T-cell (primary cell): ENCODE measurements at regions of chr7 and their contacts with region 1.

Region 1: GRCh38 chr7:25951031-25951948 is 200.7 kb upstream of the NFE2L3 start:
- DNase-seq: peak; percentile 70 to 93 (median 87)
- ATAC-seq: peak; percentile 98 to 99 (median 99)
- H3K4me3 ChIP-seq: peak overlapping the region; percentile 48 to 54
- H3K4me3 Mint-ChIP-seq: peak overlapping the region; percentile 87 to 91 (median 90)
- H3K27ac ChIP-seq: no peak overlapping the region
- H3K27ac Mint-ChIP-seq: peak overlapping the region in 1 of 2 donors; percentile 72
- H3K4me1 ChIP-seq: peaks cover 13 to 18% of the 10 kb centered on the region in 2 experiments
- H3K4me1 Mint-ChIP-seq: peaks cover 19 to 25% (median 20%) of the 10 kb centered on the region in 3 donors
- H3K27me3 ChIP-seq: peaks cover 0 to 3% of the 10 kb centered on the region in 2 experiments
- H3K27me3 Mint-ChIP-seq: peaks cover 0 to 10% of the 10 kb centered on the region in 2 donors

Region 2: GRCh38 chr7:27793780-27794179 is 1842.5 kb after region 1 on chr7:
- CTCF ChIA-PET with region 1: interaction called in 1 of 2 experiments, 14 read pairs
- POLR2A ChIA-PET with region 1: no interaction called
- DNase-seq: no peak
- ATAC-seq: no peak
- H3K4me3 ChIP-seq: no peak overlapping the region
- H3K4me3 Mint-ChIP-seq: no peak overlapping the region
- H3K27ac ChIP-seq: no peak overlapping the region
- H3K27ac Mint-ChIP-seq: no peak overlapping the region
- H3K4me1 ChIP-seq: no peaks in the 10 kb centered on the region
- H3K4me1 Mint-ChIP-seq: peaks cover 0 to 2% (median 0%) of the 10 kb centered on the region in 3 donors
- H3K27me3 ChIP-seq: no peaks in the 10 kb centered on the region
- H3K27me3 Mint-ChIP-seq: no peaks in the 10 kb centered on the region

Region 3: GRCh38 chr7:27842094-27842692 is 1890.9 kb after region 1 on chr7:
- CTCF ChIA-PET with region 1: no interaction called
- POLR2A ChIA-PET with region 1: no interaction called
- DNase-seq: no peak
- ATAC-seq: no peak
- H3K4me3 ChIP-seq: no peak overlapping the region
- H3K4me3 Mint-ChIP-seq: no peak overlapping the region
- H3K27ac ChIP-seq: no peak overlapping the region
- H3K27ac Mint-ChIP-seq: peak overlapping the region in 1 of 2 donors; percentile 4
- H3K4me1 ChIP-seq: peaks cover 7 to 13% of the 10 kb centered on the region in 2 experiments
- H3K4me1 Mint-ChIP-seq: peaks cover 14 to 22% (median 19%) of the 10 kb centered on the region in 3 donors
- H3K27me3 ChIP-seq: no peaks in the 10 kb centered on the region
- H3K27me3 Mint-ChIP-seq: no peaks in the 10 kb centered on the region